ENCODE measurements at regions of chr20 and their contacts with region 1.

Region 1: GRCh38 chr20:10536531-10536930 is 101.4 kb downstream of the SLX4IP start:
- DNase-seq: no peak
- ATAC-seq: peak; percentile 74
- H3K4me3 ChIP-seq: no peak overlapping the region
- H3K27ac ChIP-seq: no peak overlapping the region
- H3K4me1 ChIP-seq: peaks cover 1% of the 10 kb centered on the region
- H3K27me3 ChIP-seq: no peaks in the 10 kb centered on the region
- CTCF ChIP-seq: peak; percentile 22 to 55 (median 54); a peak in 5 of 6 replicates
- EP300 ChIP-seq: no peak
- POLR2A ChIP-seq: no peak
- RAD21 ChIP-seq: peak; percentile 52; the same call in 1 of the 2 replicates

Region 2: DNA sequence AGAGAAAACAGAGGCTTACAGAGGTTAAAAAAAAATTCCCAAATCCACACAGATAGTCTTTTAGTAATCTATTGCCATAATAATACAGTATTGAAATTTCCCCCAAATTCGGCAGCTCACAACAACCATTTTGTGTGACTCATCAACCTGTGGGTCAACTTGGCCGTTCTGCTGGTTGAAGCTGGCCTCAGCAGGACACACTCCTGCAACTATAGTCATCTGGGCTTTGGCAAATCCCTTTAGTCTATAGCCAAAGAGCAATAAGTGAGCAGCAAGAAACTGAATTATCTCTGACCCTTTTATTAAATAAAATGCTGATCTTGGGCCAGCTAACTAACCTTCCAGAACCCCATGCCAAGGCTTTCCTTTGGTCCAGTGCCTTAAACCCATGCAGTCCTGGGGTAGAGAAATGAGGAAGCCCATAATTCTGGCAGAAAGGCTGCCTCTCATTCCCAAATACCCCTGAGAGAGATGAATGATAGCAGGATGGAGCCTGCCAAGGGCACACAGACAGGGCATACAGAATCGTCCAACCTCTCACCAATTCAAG is 335.1 kb before region 1 on chr20:
- CTCF ChIA-PET with region 1: no interaction called
- POLR2A ChIA-PET with region 1: no interaction called
- RAD21 ChIA-PET with region 1: no interaction called
- SMC1A ChIA-PET with region 1: no interaction called
- in situ Hi-C with region 1: no loop called
- intact Hi-C with region 1: no loop called
- DNase-seq: no peak
- ATAC-seq: no peak
- H3K4me3 ChIP-seq: no peak overlapping the region
- H3K27ac ChIP-seq: no peak overlapping the region
- H3K4me1 ChIP-seq: no peaks in the 10 kb centered on the region
- H3K27me3 ChIP-seq: no peaks in the 10 kb centered on the region
- CTCF ChIP-seq: no peak
- EP300 ChIP-seq: no peak
- POLR2A ChIP-seq: no peak
- RAD21 ChIP-seq: no peak

Region 3: GRCh38 chr20:10469599-10469998 is 66.9 kb before region 1 on chr20:
- CTCF ChIA-PET with region 1: interaction called, 8 read pairs
- POLR2A ChIA-PET with region 1: no interaction called
- RAD21 ChIA-PET with region 1: interaction called, 9 read pairs
- SMC1A ChIA-PET with region 1: interaction called, 34 read pairs
- in situ Hi-C with region 1: no loop called
- intact Hi-C with region 1: loop called (anchors 10 kb)
- DNase-seq: no peak
- ATAC-seq: peak; percentile 81
- H3K4me3 ChIP-seq: no peak overlapping the region
- H3K27ac ChIP-seq: no peak overlapping the region
- H3K4me1 ChIP-seq: peaks cover 3% of the 10 kb centered on the region; the same call in 1 of the 2 replicates
- H3K27me3 ChIP-seq: no peaks in the 10 kb centered on the region
- CTCF ChIP-seq: peak; percentile 32 to 50 (median 49); a peak in 5 of 6 replicates
- EP300 ChIP-seq: no peak
- POLR2A ChIP-seq: no peak
- RAD21 ChIP-seq: peak; percentile 67

Region 4: GRCh38 chr20:10481676-10482075 is 54.9 kb before region 1 on chr20:
- CTCF ChIA-PET with region 1: interaction called, 10 read pairs
- POLR2A ChIA-PET with region 1: interaction called, 3 read pairs
- RAD21 ChIA-PET with region 1: interaction called, 13 read pairs
- SMC1A ChIA-PET with region 1: interaction called, 34 read pairs
- in situ Hi-C with region 1: no loop called
- intact Hi-C with region 1: loop called (anchors 10 kb)
- DNase-seq: no peak
- ATAC-seq: no peak
- H3K4me3 ChIP-seq: no peak overlapping the region
- H3K27ac ChIP-seq: no peak overlapping the region
- H3K4me1 ChIP-seq: peaks cover 17% of the 10 kb centered on the region
- H3K27me3 ChIP-seq: no peaks in the 10 kb centered on the region
- CTCF ChIP-seq: no peak
- EP300 ChIP-seq: no peak
- POLR2A ChIP-seq: no peak
- RAD21 ChIP-seq: no peak

Region 5: DNA sequence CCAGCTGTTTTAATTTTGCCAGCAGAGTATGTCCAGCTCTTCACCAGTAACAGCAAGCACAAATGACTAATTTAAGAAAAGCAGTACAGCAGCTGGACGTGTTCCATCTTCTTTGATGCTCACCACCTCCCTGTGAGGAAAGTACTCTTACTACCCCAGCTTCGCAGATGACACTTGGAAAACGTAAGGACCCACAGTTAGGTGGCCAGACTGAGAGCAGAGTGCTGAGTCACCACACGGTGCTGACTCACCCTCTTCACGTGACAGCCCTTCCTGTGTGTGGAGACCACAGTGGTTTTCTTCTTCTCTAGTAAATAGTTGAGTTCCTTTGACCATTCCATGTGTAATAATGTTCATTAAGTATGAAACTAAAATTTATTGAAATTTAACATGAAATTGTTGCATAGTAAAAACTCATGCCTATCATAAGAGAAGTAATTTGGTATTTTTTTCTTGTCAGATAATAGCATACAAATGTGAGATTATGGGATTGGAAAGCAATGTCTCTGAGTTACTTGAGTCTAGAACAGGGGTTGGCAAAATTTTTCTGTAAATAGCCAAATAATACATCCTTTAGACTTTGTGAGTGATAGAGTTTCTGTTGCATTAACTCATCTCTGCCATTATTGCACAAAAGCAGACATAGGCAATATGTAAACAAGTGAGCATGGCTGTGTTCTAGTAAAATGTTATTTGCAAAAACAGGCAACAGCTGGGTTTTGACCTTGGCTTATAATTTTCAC is 24.9 kb before region 1 on chr20:
- CTCF ChIA-PET with region 1: interaction called, 10 read pairs
- POLR2A ChIA-PET with region 1: interaction called, 3 read pairs
- RAD21 ChIA-PET with region 1: interaction called, 10 read pairs
- SMC1A ChIA-PET with region 1: interaction called, 24 read pairs
- in situ Hi-C with region 1: no loop called
- intact Hi-C with region 1: no loop called
- DNase-seq: peak; percentile 94
- ATAC-seq: peak; percentile 98
- H3K4me3 ChIP-seq: no peak overlapping the region; the same call in 1 of the 2 replicates
- H3K27ac ChIP-seq: peak overlapping the region; percentile 87
- H3K4me1 ChIP-seq: peaks cover 32% of the 10 kb centered on the region
- H3K27me3 ChIP-seq: no peaks in the 10 kb centered on the region
- CTCF ChIP-seq: 0 out of 6 replicates have a peak, but pooled peaks of 1 of the 3 experiments have one; percentile 2
- EP300 ChIP-seq: peak; percentile 55 to 78; a peak in 3 of 4 replicates
- POLR2A ChIP-seq: peak; percentile 57
- RAD21 ChIP-seq: 0 out of 2 replicates have a peak, but pooled peaks have one; percentile 5

Region 6: DNA sequence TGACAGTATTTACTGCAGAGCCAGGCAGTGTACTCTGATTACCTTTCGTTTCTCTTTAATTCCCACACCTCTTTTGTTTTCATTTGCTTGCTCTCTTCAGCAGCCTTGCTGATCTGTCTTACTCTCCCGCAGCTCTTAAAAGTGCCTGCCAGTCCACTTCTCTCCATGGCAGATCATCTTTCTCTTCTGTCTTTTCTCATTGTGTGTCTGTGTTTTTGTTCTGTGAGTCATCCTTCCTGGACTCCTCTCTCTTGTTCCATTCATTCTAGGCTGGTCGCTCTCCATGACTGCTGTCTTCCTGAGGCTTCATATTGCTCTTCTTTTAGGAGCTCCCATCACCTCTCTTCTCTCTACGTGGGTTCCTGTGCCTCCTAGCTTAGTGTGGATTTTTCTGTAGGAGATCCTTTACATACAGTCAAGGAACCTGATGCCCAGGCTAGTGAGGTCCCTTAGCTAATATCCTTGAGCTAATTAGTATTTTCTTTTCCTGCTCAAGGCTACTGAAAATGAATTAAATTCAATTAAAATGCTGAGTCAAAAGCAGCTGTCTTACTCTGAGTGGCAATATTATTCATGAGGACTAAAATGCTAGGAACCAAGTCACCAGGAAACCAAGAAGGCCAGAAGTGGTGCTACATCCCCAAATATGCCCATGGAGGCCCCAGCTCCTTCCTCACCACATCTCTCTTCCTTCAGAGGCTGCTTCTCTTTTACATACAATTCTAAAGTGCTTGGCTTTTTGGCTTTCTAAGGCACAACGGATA is 15.3 kb before region 1 on chr20:
- CTCF ChIA-PET with region 1: interaction called, 14 read pairs
- POLR2A ChIA-PET with region 1: interaction called, 3 read pairs
- RAD21 ChIA-PET with region 1: interaction called, 5 read pairs
- SMC1A ChIA-PET with region 1: interaction called, 24 read pairs
- in situ Hi-C with region 1: no loop called
- intact Hi-C with region 1: no loop called
- DNase-seq: no peak
- ATAC-seq: peak; percentile 35
- H3K4me3 ChIP-seq: no peak overlapping the region
- H3K27ac ChIP-seq: no peak overlapping the region
- H3K4me1 ChIP-seq: peaks cover 9% of the 10 kb centered on the region
- H3K27me3 ChIP-seq: no peaks in the 10 kb centered on the region
- CTCF ChIP-seq: no peak
- EP300 ChIP-seq: no peak
- POLR2A ChIP-seq: no peak
- RAD21 ChIP-seq: no peak

Region 7: GRCh38 chr20:10578607-10579006 is 42.1 kb after region 1 on chr20:
- CTCF ChIA-PET with region 1: no interaction called
- POLR2A ChIA-PET with region 1: no interaction called
- RAD21 ChIA-PET with region 1: no interaction called
- SMC1A ChIA-PET with region 1: no interaction called
- in situ Hi-C with region 1: no loop called
- intact Hi-C with region 1: no loop called
- DNase-seq: no peak
- ATAC-seq: peak; percentile 69
- H3K4me3 ChIP-seq: no peak overlapping the region
- H3K27ac ChIP-seq: no peak overlapping the region
- H3K4me1 ChIP-seq: no peaks in the 10 kb centered on the region
- H3K27me3 ChIP-seq: no peaks in the 10 kb centered on the region
- CTCF ChIP-seq: no peak
- EP300 ChIP-seq: no peak
- POLR2A ChIP-seq: no peak
- RAD21 ChIP-seq: no peak

Region 8: GRCh38 chr20:10658051-10658823 is 121.7 kb after region 1 on chr20:
- CTCF ChIA-PET with region 1: no interaction called
- POLR2A ChIA-PET with region 1: no interaction called
- RAD21 ChIA-PET with region 1: no interaction called
- SMC1A ChIA-PET with region 1: no interaction called
- in situ Hi-C with region 1: no loop called
- intact Hi-C with region 1: no loop called
- DNase-seq: no peak
- ATAC-seq: no peak
- H3K4me3 ChIP-seq: no peak overlapping the region
- H3K27ac ChIP-seq: no peak overlapping the region
- H3K4me1 ChIP-seq: peaks cover 17% of the 10 kb centered on the region
- H3K27me3 ChIP-seq: no peaks in the 10 kb centered on the region
- CTCF ChIP-seq: no peak
- EP300 ChIP-seq: no peak
- POLR2A ChIP-seq: no peak
- RAD21 ChIP-seq: no peak

Measured in GM12878 (cell line).